ENCODE measurements at regions of chr12 and their contacts with region 1.

Region 1: DNA sequence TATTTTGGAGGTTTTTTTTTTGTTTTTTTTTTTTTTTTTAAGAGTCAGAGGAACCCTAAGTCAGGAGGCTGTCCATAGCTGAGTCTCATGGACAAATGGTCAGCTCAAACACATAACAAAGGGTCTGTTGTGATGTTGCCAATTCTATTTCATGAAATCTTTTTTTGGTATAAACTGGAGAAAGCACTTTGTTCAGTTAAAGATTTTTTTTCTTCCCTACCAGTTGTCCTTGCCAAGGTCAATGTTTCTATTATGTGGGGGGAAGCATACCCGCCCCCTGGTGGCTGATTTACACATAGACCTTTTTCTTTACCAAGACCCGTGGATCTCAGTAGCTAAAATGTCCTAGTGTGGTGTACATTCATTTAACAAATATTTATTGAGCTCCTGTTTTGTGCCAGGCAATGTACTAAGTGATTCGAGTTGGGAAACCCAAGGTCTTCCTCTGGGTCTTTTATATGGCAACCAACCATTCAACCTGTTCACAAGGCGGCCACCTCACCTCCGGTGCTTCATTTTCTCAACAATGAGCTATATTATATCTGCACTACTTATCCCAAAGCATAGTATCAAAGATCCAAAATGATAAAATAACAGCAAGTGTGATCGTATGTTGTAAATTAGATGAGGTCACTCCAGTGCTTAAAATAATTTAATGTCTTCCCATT is 214.5 kb downstream of the PAH start:
- DNase-seq: peak; percentile 7
- H3K4me3 ChIP-seq: no peak overlapping the region
- CTCF ChIP-seq: peak; percentile 60

Region 2: GRCh38 chr12:102513272-102513671 is 189.3 kb before region 1 on chr12:
- CTCF ChIA-PET with region 1: interaction called, 30 read pairs
- POLR2A ChIA-PET with region 1: no interaction called
- DNase-seq: no peak
- H3K4me3 ChIP-seq: no peak overlapping the region
- CTCF ChIP-seq: no peak

Region 3: GRCh38 chr12:102527171-102527720 is 175.3 kb before region 1 on chr12:
- CTCF ChIA-PET with region 1: interaction called, 11 read pairs
- POLR2A ChIA-PET with region 1: no interaction called
- DNase-seq: peak; percentile 31
- H3K4me3 ChIP-seq: no peak overlapping the region
- CTCF ChIP-seq: no peak

Region 4: DNA sequence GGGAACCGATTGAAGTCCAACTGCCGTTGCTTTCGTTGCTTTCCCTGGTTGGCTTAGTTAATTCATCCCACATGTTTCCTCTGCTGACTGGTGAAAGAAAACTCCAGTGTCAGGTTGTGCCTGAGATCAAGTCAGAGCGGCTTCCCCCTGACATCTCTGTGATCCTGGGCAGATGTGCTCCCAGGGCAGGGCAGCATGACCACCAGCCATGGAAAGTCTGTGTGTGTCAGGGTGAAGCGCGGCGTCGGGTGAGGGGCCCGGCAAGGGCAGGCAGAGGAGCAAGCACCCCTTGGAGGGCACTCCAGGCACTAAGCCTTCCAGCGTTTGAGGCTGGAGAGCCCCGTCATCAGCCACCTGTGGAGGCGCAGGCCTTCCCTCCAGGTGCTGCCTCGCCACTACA is 167.7 kb before region 1 on chr12:
- CTCF ChIA-PET with region 1: interaction called, 11 read pairs
- POLR2A ChIA-PET with region 1: no interaction called
- DNase-seq: no peak
- H3K4me3 ChIP-seq: peak overlapping the region; percentile 18; the same call in 1 of the 2 replicates
- CTCF ChIP-seq: no peak

Region 5: GRCh38 chr12:102939670-102940222 is 237.2 kb after region 1 on chr12:
- CTCF ChIA-PET with region 1: no interaction called
- POLR2A ChIA-PET with region 1: no interaction called
- DNase-seq: no peak
- H3K4me3 ChIP-seq: no peak overlapping the region
- CTCF ChIP-seq: no peak